ENCODE measurements at regions of chr7 and their contacts with region 1.

Region 1: DNA sequence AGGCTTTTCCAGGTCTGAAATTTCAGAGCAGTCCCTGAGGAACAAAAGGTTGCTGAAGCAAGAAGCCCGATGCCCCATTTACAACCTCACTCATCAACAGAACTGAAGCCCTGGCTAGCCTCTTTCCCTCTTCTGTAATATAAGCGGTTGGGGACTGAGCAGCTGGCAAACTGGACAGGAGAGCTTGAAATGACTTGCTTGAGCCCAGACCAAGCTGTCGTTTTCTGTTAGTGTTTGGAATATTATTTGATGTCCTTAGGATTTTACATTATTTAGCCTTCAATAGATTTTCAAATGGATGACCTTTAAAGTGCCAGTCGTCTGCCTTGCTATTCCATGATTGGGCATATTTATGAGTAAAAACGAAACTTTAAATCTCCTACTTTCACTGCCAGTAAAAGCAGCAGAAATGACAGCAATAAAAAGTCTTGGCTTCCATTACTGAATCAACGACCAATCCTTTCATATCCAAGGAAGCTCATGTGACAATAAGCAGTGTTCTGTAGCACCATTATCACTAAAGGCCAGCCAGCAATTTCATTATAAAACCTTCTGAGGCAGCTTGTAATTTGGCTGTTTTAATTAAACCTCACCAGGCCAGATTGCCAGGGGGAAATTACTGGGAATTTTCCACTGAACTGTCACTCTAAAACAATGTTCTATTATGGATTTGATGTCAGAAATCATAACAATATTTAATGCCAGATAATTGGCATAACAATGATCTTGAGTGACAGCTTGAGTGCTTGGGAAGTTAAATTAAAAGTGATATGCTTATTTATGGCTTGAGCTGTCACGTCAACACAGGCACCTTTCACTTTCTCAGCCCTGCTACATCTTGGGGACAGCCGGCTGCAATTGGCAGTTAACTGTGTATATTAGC is 85.9 kb downstream of the LSMEM1 start:
- DNase-seq: no peak
- ATAC-seq: peak; percentile 52 to 87 (median 66)
- H3K4me3 ChIP-seq: peak overlapping the region in 4 of 12 donors; percentile 0 to 13 (median 2)
- H3K27ac ChIP-seq: peak overlapping the region; percentile 6 to 75 (median 51)
- H3K4me1 ChIP-seq: peaks cover 0 to 7% (median 2%) of the 10 kb centered on the region in 12 donors
- H3K27me3 ChIP-seq: no peaks in the 10 kb centered on the region
- CTCF ChIP-seq: no peak
- POLR2A ChIP-seq: no peak

Region 2: DNA sequence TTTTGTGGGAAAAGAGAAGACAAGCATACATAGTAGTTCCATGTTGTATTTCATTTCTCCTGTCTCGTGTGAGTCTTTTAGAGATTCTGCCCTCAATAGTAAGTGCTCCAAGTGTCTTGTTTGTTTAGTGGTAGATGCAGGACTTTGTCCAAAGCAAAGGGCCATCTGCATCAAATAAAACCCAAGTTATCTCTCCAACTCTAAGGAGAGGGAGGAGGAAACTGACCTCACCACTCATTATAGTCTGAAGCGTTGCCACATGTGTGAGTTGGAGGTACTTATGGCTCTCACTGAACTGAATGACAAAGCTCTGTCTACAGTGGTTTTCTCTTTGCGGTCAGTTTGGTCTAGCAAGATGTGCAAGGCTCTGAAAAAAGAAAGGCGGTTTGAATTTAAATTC is 633.1 kb before region 1 on chr7:
- intact Hi-C with region 1: no loop called
- DNase-seq: no peak
- ATAC-seq: no peak
- H3K4me3 ChIP-seq: no peak overlapping the region
- H3K27ac ChIP-seq: no peak overlapping the region
- H3K4me1 ChIP-seq: peaks cover 0 to 10% (median 2%) of the 10 kb centered on the region in 12 donors
- H3K27me3 ChIP-seq: no peaks in the 10 kb centered on the region
- CTCF ChIP-seq: no peak
- POLR2A ChIP-seq: no peak

Region 3: GRCh38 chr7:112510001-112510742 is 56.5 kb before region 1 on chr7:
- intact Hi-C with region 1: no loop called
- DNase-seq: no peak
- ATAC-seq: peak in 3 of 4 donors; percentile 7 to 40 (median 26)
- H3K4me3 ChIP-seq: no peak overlapping the region
- H3K27ac ChIP-seq: no peak overlapping the region
- H3K4me1 ChIP-seq: peaks cover 0 to 18% (median 6%) of the 10 kb centered on the region in 12 donors
- H3K27me3 ChIP-seq: no peaks in the 10 kb centered on the region
- CTCF ChIP-seq: no peak
- POLR2A ChIP-seq: no peak

Region 4: GRCh38 chr7:112995171-112995824 is 428.6 kb after region 1 on chr7:
- intact Hi-C with region 1: loop called in 1 of 10 experiments (anchors 5 kb)
- DNase-seq: peak in 4 of 5 donors; percentile 50 to 69 (median 63)
- ATAC-seq: peak; percentile 92 to 97 (median 94)
- H3K4me3 ChIP-seq: peak overlapping the region; percentile 2 to 57 (median 40)
- H3K27ac ChIP-seq: peak overlapping the region; percentile 61 to 96 (median 86)
- H3K4me1 ChIP-seq: peaks cover 0 to 7% (median 0%) of the 10 kb centered on the region in 12 donors
- H3K27me3 ChIP-seq: no peaks in the 10 kb centered on the region
- CTCF ChIP-seq: no peak
- POLR2A ChIP-seq: peak in 1 of 2 donors; percentile 42

Measured in heart left ventricle (tissue), 16 donors.